ENCODE measurements at regions of chr9 and their contacts with region 1.

Region 1: DNA sequence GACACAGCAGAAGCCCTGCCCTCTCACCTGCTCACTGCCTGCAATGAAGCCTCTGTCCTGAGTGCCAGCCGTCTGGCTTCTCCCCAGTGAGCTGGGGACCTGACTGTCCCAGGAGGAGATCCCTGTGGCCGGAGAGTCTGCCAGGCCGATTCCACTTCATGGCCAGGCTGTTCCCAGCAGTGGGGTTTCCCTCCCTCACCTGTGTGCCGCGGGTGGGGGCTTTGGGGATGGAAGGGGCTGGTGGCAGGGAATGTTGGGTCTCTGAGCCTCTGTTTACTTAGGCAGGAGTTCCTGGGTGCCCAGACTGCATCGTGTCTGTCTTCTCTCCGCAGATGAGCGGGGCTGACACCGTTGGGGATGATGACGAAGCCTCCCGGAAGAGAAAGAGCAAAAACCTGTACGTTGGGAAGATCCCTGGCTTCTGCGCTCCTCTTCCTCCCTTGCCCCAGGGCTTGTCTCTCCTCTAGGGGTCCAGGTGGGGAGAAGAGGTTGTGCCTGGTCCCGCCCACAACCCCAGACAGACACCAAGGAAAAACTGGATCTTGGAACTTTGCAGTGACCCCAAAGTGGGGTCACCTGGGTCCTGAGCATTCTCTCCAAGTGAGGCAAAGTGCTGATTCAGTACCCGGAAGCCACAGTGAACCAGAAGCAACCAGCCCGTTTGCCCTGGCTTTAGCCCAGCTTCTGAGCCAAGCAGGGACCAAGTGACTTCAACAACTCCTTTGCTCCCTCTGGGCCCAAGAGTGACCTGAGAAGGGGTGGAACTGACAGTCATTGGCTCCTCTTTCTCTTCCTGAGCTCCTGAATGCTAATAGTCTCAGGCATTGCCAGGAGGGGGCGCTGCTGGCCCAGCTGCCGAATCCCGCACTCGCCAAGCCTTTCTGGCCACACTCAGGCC is 127.7 kb downstream of the RGS3 start:
- DNase-seq: no peak
- H3K4me3 ChIP-seq: no peak overlapping the region
- CTCF ChIP-seq: peak; percentile 86

Region 2: GRCh38 chr9:113275157-113276131 is 315.8 kb before region 1 on chr9 and contains the starts of genes CDC26 and PRPF4:
- CTCF ChIA-PET with region 1: interaction called, 10 read pairs
- POLR2A ChIA-PET with region 1: no interaction called
- DNase-seq: peak; percentile 94
- H3K4me3 ChIP-seq: peak within 1 kb of the TSS; percentile 97
- CTCF ChIP-seq: no peak

Region 3: GRCh38 chr9:113446323-113446740 is 144.9 kb before region 1 on chr9:
- CTCF ChIA-PET with region 1: interaction called, 405 read pairs
- POLR2A ChIA-PET with region 1: interaction called, 3 read pairs
- DNase-seq: no peak
- H3K4me3 ChIP-seq: no peak overlapping the region
- CTCF ChIP-seq: peak; percentile 13

Region 4: GRCh38 chr9:113484258-113484730 is 107.0 kb before region 1 on chr9:
- CTCF ChIA-PET with region 1: no interaction called
- POLR2A ChIA-PET with region 1: no interaction called
- DNase-seq: no peak
- H3K4me3 ChIP-seq: no peak overlapping the region
- CTCF ChIP-seq: no peak

Region 5: GRCh38 chr9:113564498-113565237 is 26.6 kb before region 1 on chr9:
- CTCF ChIA-PET with region 1: interaction called, 29 read pairs
- POLR2A ChIA-PET with region 1: interaction called, 4 read pairs
- DNase-seq: no peak
- H3K4me3 ChIP-seq: peak overlapping the region; percentile 74
- CTCF ChIP-seq: peak; percentile 6

Region 6: GRCh38 chr9:113602126-113603044 is 11.1 kb after region 1 on chr9:
- CTCF ChIA-PET with region 1: interaction called, 32 read pairs
- POLR2A ChIA-PET with region 1: interaction called, 12 read pairs
- DNase-seq: no peak
- H3K4me3 ChIP-seq: no peak overlapping the region
- CTCF ChIP-seq: no peak

Region 7: GRCh38 chr9:113614843-113615648 is 23.8 kb after region 1 on chr9:
- CTCF ChIA-PET with region 1: interaction called, 28 read pairs
- POLR2A ChIA-PET with region 1: interaction called, 7 read pairs
- DNase-seq: no peak
- H3K4me3 ChIP-seq: peak overlapping the region; percentile 18
- CTCF ChIP-seq: no peak

Region 8: DNA sequence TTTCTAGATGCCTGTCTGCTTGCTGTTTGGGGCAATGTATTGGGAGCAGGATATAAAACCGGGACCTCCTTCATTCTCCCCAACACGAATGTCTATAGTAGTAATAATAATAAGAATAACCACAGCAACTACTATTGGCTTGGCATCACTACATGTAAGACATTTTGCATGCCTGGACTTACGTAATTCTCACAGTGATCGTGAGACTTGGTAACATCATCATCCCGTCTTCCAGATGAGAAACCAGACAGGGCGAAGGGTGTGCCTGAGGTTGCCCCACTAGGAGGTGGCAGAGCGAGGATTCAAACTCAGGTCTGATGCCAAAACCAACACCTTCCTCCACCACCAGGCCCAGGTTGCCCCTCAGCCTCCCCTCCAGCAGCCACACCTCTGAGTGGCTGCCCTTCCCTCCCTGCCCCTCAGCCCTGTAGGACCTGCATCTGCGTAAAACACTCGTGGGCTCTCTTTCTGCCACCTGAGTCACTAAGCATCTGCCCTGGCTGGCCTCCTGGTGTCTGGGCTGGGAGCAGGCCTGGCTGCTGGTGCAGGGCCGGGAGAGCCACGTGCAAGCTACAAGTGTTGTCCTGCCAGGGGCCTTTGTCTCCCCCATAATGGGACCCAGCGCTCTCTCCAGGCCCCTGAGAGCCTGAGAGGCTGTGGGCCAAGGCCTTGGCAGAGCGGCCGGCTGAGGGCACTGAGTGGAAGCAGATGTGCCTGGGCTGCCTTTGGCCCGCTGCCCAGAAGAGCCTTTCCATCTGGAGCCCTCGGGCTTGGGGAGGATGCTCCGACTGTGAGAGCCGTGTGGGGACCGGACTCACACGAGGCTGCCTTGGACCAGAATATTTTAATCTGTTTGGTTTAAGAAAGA is 57.6 kb after region 1 on chr9:
- CTCF ChIA-PET with region 1: interaction called, 1,449 read pairs
- POLR2A ChIA-PET with region 1: interaction called, 22 read pairs
- DNase-seq: no peak
- H3K4me3 ChIP-seq: no peak overlapping the region
- CTCF ChIP-seq: no peak

Region 9: DNA sequence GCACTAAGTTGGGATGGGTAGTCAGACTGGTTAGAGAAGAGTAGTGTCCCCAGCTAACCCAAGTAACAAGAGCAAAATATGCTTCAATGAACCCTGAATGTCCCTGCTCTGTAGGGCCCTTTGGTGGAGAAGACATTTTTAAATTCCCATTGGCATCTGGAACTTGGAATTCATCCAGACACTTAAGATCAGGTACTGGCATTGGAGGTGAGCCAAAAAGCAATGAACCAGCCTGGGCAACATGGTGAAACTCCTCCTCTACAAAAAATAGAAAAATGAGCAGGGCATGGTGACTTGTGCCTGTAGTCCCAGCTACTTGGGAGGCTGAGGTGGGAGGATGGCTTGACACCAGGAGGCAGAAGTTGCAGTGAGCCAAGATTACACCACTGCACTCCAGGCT is 225.9 kb after region 1 on chr9:
- CTCF ChIA-PET with region 1: no interaction called
- POLR2A ChIA-PET with region 1: no interaction called
- DNase-seq: no peak
- H3K4me3 ChIP-seq: no peak overlapping the region
- CTCF ChIP-seq: no peak

Measured in AG04449 (cell line).